ENCODE measurements at regions of chr2 and their contacts with region 1.

Region 1: GRCh38 chr2:144183727-144184126 is 336.2 kb downstream of the ZEB2 start:
- DNase-seq: peak; percentile 74
- H3K4me3 Mint-ChIP-seq: peak overlapping the region; percentile 50
- H3K27ac Mint-ChIP-seq: peak overlapping the region; percentile 89
- H3K4me1 Mint-ChIP-seq: peaks cover 37% of the 10 kb centered on the region
- H3K27me3 Mint-ChIP-seq: no peaks in the 10 kb centered on the region

Region 2: DNA sequence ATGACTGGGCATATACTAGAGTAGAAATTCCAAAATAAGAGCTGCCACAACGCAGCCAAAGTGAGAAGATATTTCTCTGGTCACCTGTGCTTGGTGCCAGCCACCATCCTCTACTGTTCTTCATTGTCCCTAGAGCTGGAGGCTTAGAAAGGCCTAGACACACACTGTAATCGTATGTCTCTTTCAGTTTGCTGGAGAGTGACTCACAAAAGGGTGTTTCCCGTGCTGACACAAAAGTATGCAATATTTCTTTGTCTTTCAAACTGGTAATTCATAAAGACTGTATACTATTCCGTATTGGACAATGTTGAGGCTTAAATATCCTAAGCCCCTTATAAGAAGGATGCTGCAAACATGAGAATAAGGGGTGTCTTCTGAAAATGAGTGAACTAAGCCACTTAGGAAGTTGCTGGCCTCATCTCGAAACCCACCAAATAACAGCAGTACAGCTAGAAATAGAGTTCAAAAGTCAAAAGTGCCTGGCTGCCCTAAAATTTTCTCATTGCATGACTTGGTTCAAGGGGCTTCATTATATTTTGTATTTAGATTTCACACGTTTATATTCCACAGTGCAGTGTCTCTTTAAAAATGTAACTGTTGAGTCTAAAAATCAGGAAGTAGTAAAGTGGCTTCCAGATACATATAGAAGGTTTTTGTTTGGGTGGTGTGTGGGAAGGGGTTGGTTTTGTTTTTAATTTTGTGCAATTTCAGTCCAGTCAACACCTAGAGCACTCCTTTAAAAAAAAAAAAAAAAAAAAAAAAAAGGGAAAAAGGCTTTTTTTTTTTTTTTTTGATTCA is 453.4 kb before region 1 on chr2:
- intact Hi-C with region 1: loop called (anchors 1 kb)
- DNase-seq: no peak
- H3K4me3 Mint-ChIP-seq: peak overlapping the region; percentile 49
- H3K27ac Mint-ChIP-seq: peak overlapping the region; percentile 92
- H3K4me1 Mint-ChIP-seq: peaks cover 58% of the 10 kb centered on the region
- H3K27me3 Mint-ChIP-seq: no peaks in the 10 kb centered on the region

Region 3: GRCh38 chr2:144166743-144167142 is 17.0 kb before region 1 on chr2:
- intact Hi-C with region 1: loop called (anchors 2 kb)
- DNase-seq: no peak
- H3K4me3 Mint-ChIP-seq: no peak overlapping the region
- H3K27ac Mint-ChIP-seq: no peak overlapping the region
- H3K4me1 Mint-ChIP-seq: no peaks in the 10 kb centered on the region
- H3K27me3 Mint-ChIP-seq: no peaks in the 10 kb centered on the region

Region 4: GRCh38 chr2:144256996-144257707 is 73.4 kb after region 1 on chr2:
- intact Hi-C with region 1: loop called (anchors 2 kb)
- DNase-seq: no peak
- H3K4me3 Mint-ChIP-seq: no peak overlapping the region
- H3K27ac Mint-ChIP-seq: peak overlapping the region; percentile 71
- H3K4me1 Mint-ChIP-seq: peaks cover 41% of the 10 kb centered on the region
- H3K27me3 Mint-ChIP-seq: no peaks in the 10 kb centered on the region

Region 5: DNA sequence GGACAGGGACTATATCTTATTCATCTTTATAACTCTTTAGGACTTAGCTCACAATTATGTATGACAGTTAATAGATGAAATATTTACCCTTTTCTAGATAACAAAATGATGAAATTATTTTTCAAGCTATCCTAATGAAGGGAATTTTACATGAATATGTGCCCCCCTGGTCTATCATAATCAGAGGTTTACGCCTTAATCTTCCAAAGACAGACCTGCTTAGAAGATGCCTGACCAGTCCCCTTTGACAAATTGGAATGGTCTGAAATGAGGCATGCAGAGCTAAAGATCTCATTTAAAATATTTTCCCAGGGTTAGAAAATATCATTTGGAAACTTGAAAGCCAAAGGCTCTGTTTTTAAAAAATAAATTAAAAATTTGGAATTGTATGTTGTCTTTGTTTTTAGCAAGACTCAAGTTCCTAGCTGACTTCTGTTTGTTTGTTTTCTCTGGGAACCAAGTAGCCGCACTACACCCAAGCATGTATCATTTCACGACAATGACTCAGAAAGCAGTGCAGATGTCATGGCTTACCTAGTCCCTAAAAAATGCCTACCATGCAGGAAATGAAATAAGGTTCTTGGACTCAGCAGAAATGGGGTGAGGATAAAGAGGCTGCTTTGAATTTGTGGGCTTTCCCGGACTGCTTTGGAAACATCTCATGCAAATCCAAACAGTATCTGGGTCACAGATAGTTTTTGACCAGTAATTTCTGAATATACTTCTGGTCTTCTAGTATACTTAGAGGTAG is 174.1 kb after region 1 on chr2:
- intact Hi-C with region 1: loop called (anchors 1 kb)
- DNase-seq: peak; percentile 13
- H3K4me3 Mint-ChIP-seq: no peak overlapping the region
- H3K27ac Mint-ChIP-seq: peak overlapping the region; percentile 71
- H3K4me1 Mint-ChIP-seq: peaks cover 30% of the 10 kb centered on the region
- H3K27me3 Mint-ChIP-seq: no peaks in the 10 kb centered on the region

Region 6: DNA sequence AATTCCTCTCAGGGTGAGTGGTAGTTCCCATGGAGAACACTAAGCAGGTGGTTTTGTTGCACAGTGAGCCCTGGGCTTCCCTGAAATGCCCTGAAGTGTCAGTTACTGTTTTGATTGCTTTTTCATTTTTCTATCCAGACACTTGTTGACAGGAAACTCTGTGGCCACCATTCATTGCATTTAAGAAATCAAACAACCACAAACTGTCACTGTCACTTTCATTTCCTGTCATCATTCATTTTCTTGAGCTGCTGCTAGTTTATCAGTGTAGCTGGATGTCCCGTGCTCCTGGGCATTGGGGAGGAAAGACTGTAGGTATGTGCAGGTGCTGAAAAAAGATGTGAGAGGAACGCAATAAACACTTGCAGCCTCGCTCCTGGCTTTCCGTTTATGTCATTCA is 1227.8 kb after region 1 on chr2:
- intact Hi-C with region 1: loop called (anchors 2 kb)
- DNase-seq: peak; percentile 31
- H3K4me3 Mint-ChIP-seq: peak overlapping the region; percentile 12
- H3K27ac Mint-ChIP-seq: peak overlapping the region; percentile 31
- H3K4me1 Mint-ChIP-seq: peaks cover 22% of the 10 kb centered on the region
- H3K27me3 Mint-ChIP-seq: peaks cover 38% of the 10 kb centered on the region

Measured in activated T-helper 1 cell treated with anti-CD3 and anti-CD28 coated beads, Interleukin-12 subunit alpha, Interleukin-12 subunit beta, Interleukin-2, Interleukin-4 antibody, amounts not matched to agents 30 ng/mL and 10 ng/mL and 1 ng/mL, durations not matched to agents 14 hours and 24 hours and 36 hours (primary cell).